ENCODE measurements at regions of chr4 and their contacts with region 1.

Region 1: DNA sequence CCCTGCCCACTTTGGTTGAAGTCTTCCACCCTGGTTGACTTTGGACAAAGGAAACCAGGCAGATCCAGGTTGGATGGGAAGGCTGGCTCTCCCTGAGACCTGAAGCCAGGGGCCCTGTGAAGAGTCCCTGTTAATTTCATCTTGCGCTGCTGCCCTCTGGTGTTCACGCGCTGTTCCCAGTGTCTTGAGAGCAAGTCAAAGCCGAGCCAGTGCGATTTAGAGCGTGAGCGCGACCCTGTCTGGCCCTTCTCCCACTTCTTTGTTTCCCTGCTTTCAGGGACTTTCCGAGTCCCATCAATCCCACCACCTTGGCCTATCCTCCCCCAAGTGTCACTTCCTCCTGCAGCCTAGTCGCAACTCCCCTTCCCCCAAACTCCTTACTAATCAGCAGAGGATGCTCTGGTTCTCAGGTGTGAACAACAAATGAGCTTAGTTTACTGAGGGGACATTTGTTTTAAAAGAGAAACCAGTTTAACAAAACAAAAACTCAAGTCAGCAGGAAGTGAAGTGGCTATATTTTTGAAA is 25.8 kb upstream of the CHRNA9 start:
- DNase-seq: peak; percentile 97
- H3K4me3 Mint-ChIP-seq: peak overlapping the region; percentile 71
- H3K27ac Mint-ChIP-seq: peak overlapping the region; percentile 97
- H3K4me1 Mint-ChIP-seq: peaks cover 89% of the 10 kb centered on the region
- H3K27me3 Mint-ChIP-seq: no peaks in the 10 kb centered on the region

Region 2: GRCh38 chr4:39458505-39459300 is 850.6 kb before region 1 on chr4 and contains the starts of genes LIAS and RPL9:
- CTCF ChIA-PET with region 1: no interaction called
- intact Hi-C with region 1: loop called (anchors 5 kb)
- DNase-seq: peak; percentile 95
- H3K4me3 Mint-ChIP-seq: peak within 1 kb of the TSS; percentile 91
- H3K27ac Mint-ChIP-seq: peak within 1 kb of the TSS; percentile 98
- H3K4me1 Mint-ChIP-seq: peaks cover 48% of the 10 kb centered on the region
- H3K27me3 Mint-ChIP-seq: no peaks in the 10 kb centered on the region
- total RNA-seq, gene LIAS: 30.9 to 31.7 TPM
- total RNA-seq, gene RPL9: 2,383 to 2,428 TPM

Region 3: GRCh38 chr4:39977489-39978377 is 331.6 kb before region 1 on chr4 and contains the start of gene PDS5A:
- CTCF ChIA-PET with region 1: no interaction called
- intact Hi-C with region 1: loop called (anchors 5 kb)
- DNase-seq: peak; percentile 91
- H3K4me3 Mint-ChIP-seq: peak within 1 kb of the TSS; percentile 93
- H3K27ac Mint-ChIP-seq: peak within 1 kb of the TSS; percentile 96
- H3K4me1 Mint-ChIP-seq: peaks cover 33% of the 10 kb centered on the region
- H3K27me3 Mint-ChIP-seq: no peaks in the 10 kb centered on the region
- total RNA-seq, gene PDS5A: 86.8 to 89.1 TPM

Region 4: GRCh38 chr4:40205259-40206198 is 103.8 kb before region 1 on chr4:
- CTCF ChIA-PET with region 1: interaction called, 10 read pairs
- intact Hi-C with region 1: loop called (anchors 1 kb)
- DNase-seq: peak; percentile 68
- H3K4me3 Mint-ChIP-seq: peak overlapping the region; percentile 85
- H3K27ac Mint-ChIP-seq: peak overlapping the region; percentile 98
- H3K4me1 Mint-ChIP-seq: peaks cover 51% of the 10 kb centered on the region
- H3K27me3 Mint-ChIP-seq: no peaks in the 10 kb centered on the region

Region 5: GRCh38 chr4:40255393-40256281 is 53.7 kb before region 1 on chr4:
- CTCF ChIA-PET with region 1: interaction called, 23 read pairs
- intact Hi-C with region 1: loop called (anchors 1 kb)
- DNase-seq: no peak
- H3K4me3 Mint-ChIP-seq: peak overlapping the region; percentile 0
- H3K27ac Mint-ChIP-seq: peak overlapping the region; percentile 75
- H3K4me1 Mint-ChIP-seq: peaks cover 77% of the 10 kb centered on the region
- H3K27me3 Mint-ChIP-seq: no peaks in the 10 kb centered on the region

Region 6: GRCh38 chr4:40325189-40326019 is 16.1 kb after region 1 on chr4:
- CTCF ChIA-PET with region 1: interaction called, 17 read pairs
- intact Hi-C with region 1: loop called (anchors 1 kb)
- DNase-seq: peak; percentile 82
- H3K4me3 Mint-ChIP-seq: no peak overlapping the region
- H3K27ac Mint-ChIP-seq: no peak overlapping the region
- H3K4me1 Mint-ChIP-seq: peaks cover 27% of the 10 kb centered on the region
- H3K27me3 Mint-ChIP-seq: no peaks in the 10 kb centered on the region

Region 7: GRCh38 chr4:40840985-40841571 is 531.8 kb after region 1 on chr4:
- CTCF ChIA-PET with region 1: no interaction called
- intact Hi-C with region 1: loop called (anchors 5 kb)
- DNase-seq: peak; percentile 93
- H3K4me3 Mint-ChIP-seq: no peak overlapping the region
- H3K27ac Mint-ChIP-seq: peak overlapping the region; percentile 47
- H3K4me1 Mint-ChIP-seq: peaks cover 5% of the 10 kb centered on the region
- H3K27me3 Mint-ChIP-seq: no peaks in the 10 kb centered on the region

Measured in activated naive CD4-positive, alpha-beta T cell treated with anti-CD3 and anti-CD28 coated beads for 36 hours (primary cell).